ENCODE measurements at regions of chr7 and their contacts with region 1.

Region 1: DNA sequence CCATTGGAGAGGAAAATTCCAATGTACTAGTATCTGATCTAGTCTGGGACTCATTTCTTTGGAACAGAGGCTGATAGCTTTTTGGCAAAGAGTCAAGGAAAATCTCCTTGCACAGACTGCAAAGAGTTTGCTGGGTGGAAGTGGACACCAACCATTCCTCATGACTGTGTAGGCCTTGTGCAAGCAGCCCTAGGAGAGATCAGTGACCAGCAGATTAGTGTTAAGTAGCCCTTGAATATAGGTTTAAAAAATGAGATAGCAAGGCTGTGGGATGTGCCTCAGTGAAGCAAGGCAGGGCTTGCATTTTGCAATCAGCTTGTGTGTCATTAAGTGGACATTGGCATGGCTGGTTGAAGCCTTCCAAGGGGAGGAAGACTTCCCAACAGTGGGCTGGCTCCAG is 341.6 kb downstream of the PLXNA4 start:
- DNase-seq: no peak
- H3K4me3 ChIP-seq: no peak overlapping the region
- H3K27ac ChIP-seq: no peak overlapping the region
- H3K4me1 ChIP-seq: no peaks in the 10 kb centered on the region
- H3K27me3 ChIP-seq: no peaks in the 10 kb centered on the region
- CTCF ChIP-seq: no peak
- EP300 ChIP-seq: no peak
- POLR2A ChIP-seq: no peak

Region 2: DNA sequence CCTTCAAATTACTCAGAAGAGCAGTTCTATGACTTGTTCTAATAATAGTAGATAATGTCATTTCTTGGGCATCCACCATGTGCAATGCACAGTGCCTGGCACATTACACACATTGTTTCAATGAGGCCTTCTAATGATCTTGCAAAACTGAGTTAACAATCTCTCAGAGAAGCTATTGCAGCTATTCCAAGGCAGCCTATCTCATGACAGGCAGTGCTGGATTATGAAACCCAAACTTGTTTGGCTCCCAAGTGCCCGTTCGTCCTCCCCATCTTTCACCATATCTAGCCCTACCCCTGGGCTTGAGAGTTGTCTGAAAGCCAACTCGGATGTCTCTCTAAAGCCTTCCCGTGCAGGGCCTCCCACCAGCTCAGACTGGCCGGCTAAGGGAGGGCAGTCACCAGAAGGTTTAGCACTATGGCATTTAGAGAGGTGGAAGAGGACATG is 63.6 kb before region 1 on chr7:
- intact Hi-C with region 1: loop called (anchors 2 kb)
- DNase-seq: no peak
- H3K4me3 ChIP-seq: no peak overlapping the region
- H3K27ac ChIP-seq: no peak overlapping the region
- H3K4me1 ChIP-seq: no peaks in the 10 kb centered on the region
- H3K27me3 ChIP-seq: no peaks in the 10 kb centered on the region
- CTCF ChIP-seq: no peak
- EP300 ChIP-seq: no peak
- POLR2A ChIP-seq: no peak